GM23248 (cell line): ENCODE measurements at regions of chr1 and their contacts with region 1.

Region 1: DNA sequence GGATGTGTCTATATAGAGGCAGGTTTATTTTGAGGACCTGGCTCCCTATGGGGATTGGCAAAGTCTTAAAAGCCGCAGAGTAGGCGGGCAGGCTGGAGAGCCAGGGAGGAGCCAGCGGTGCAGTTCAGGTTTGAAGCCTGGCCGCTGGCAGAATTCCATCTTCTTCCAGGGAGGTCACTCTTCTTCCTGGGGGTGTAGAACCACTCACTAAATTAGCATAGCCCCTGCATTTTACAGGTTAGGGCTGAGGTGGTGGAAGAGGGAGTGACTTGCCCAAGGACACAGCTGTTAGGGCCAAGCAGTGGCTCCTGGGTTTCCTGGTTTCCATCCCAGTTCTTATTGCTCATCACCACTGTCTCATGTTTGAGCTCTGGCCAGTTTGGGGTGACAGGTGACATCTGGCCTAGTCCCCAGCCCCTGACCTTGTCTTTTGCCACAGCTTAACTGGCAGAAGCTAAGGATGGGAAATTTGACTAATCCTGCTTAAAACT is 1.4 kb downstream of the PINK1 start:
- DNase-seq: peak; percentile 73
- H3K4me3 ChIP-seq: peak overlapping the region; percentile 81
- H3K27ac ChIP-seq: peak overlapping the region; percentile 10
- H3K4me1 ChIP-seq: peaks cover 17% of the 10 kb centered on the region; the same call in 1 of the 2 replicates
- H3K27me3 ChIP-seq: no peaks in the 10 kb centered on the region

Region 2: DNA sequence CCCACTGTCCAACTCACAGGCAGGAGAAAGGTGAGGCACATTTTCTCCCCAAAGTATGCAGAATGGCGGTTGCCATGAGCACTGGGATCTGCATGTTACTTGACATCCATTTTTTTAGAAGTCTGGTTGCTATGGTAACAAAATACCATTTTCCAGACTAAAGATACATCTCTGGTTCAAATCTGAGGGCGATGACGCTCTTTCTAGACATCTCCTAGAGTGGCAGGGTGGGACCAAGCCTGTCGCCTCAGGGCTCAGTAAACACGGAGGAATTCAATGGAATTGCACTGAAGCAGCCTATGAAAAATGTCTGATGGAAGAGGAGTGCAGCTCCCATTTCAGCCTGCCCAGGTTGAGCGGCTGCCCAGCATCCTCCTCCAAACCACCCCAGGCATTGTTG is 103.7 kb before region 1 on chr1:
- in situ Hi-C with region 1: loop called (anchors 5 kb)
- DNase-seq: peak; percentile 40
- H3K4me3 ChIP-seq: no peak overlapping the region
- H3K27ac ChIP-seq: no peak overlapping the region
- H3K4me1 ChIP-seq: no peaks in the 10 kb centered on the region
- H3K27me3 ChIP-seq: peaks cover 38% of the 10 kb centered on the region

Region 3: DNA sequence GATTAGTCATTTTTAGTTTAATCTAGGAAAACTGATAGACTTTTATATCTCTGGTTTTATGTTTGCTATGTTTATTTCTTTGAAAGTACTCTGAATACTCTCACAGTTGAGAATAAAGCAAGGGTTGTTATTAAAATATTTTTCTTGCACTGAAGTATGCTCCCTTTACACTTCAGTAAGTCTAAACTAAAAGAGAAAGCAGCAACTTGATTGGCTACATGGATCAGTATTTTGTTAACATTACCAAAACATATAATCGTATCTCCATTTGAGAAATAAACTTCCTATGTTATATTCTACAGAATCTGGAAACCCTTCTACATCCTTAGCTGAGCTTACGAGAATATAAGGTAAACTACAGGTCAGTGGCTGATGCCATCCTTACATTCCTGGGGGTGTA is 302.0 kb after region 1 on chr1:
- in situ Hi-C with region 1: no loop called
- DNase-seq: no peak
- H3K4me3 ChIP-seq: no peak overlapping the region
- H3K27ac ChIP-seq: no peak overlapping the region
- H3K4me1 ChIP-seq: no peaks in the 10 kb centered on the region
- H3K27me3 ChIP-seq: no peaks in the 10 kb centered on the region